GM12878 (cell line): ENCODE measurements at regions of chr11 and their contacts with region 1.

Region 1: GRCh38 chr11:90476442-90477007 is 253.7 kb upstream of the CHORDC1 start:
- DNase-seq: peak; percentile 8
- ATAC-seq: peak; percentile 72
- H3K4me3 ChIP-seq: no peak overlapping the region
- H3K27ac ChIP-seq: no peak overlapping the region
- H3K4me1 ChIP-seq: no peaks in the 10 kb centered on the region
- H3K27me3 ChIP-seq: no peaks in the 10 kb centered on the region
- CTCF ChIP-seq: peak; percentile 49 to 55 (median 52)
- EP300 ChIP-seq: no peak
- POLR2A ChIP-seq: no peak
- RAD21 ChIP-seq: peak; percentile 64

Region 2: DNA sequence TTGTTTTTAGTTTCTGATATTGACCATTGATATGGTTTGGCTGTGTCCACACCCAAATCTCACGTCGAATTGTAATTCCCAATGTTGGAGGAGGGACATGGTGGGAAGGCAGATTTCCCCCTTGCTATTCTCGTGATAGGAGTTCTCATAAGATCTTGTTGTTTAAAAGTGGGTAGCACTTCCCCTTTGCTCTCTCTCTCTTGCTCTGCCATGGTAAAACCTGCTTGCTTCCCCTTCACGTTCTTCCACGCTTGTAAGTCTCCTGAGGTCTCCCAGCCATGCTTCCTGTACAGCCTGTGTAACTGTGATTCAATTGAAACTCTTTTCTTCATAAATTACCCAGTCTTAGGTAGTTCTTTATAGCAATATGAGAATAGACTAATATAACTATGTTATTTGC is 50.1 kb before region 1 on chr11:
- CTCF ChIA-PET with region 1: no interaction called
- POLR2A ChIA-PET with region 1: no interaction called
- RAD21 ChIA-PET with region 1: no interaction called
- SMC1A ChIA-PET with region 1: no interaction called
- in situ Hi-C with region 1: no loop called
- intact Hi-C with region 1: no loop called
- DNase-seq: no peak
- ATAC-seq: peak; percentile 36; the same call in 2 of the 3 replicates
- H3K4me3 ChIP-seq: no peak overlapping the region
- H3K27ac ChIP-seq: no peak overlapping the region
- H3K4me1 ChIP-seq: no peaks in the 10 kb centered on the region
- H3K27me3 ChIP-seq: no peaks in the 10 kb centered on the region
- CTCF ChIP-seq: no peak
- EP300 ChIP-seq: no peak
- POLR2A ChIP-seq: no peak
- RAD21 ChIP-seq: no peak

Region 3: GRCh38 chr11:90453525-90453924 is 23.0 kb before region 1 on chr11:
- CTCF ChIA-PET with region 1: no interaction called
- POLR2A ChIA-PET with region 1: no interaction called
- RAD21 ChIA-PET with region 1: no interaction called
- SMC1A ChIA-PET with region 1: no interaction called
- in situ Hi-C with region 1: no loop called
- intact Hi-C with region 1: no loop called
- DNase-seq: no peak
- ATAC-seq: no peak
- H3K4me3 ChIP-seq: no peak overlapping the region
- H3K27ac ChIP-seq: no peak overlapping the region
- H3K4me1 ChIP-seq: no peaks in the 10 kb centered on the region
- H3K27me3 ChIP-seq: no peaks in the 10 kb centered on the region
- CTCF ChIP-seq: no peak
- EP300 ChIP-seq: no peak
- POLR2A ChIP-seq: no peak
- RAD21 ChIP-seq: no peak

Region 4: DNA sequence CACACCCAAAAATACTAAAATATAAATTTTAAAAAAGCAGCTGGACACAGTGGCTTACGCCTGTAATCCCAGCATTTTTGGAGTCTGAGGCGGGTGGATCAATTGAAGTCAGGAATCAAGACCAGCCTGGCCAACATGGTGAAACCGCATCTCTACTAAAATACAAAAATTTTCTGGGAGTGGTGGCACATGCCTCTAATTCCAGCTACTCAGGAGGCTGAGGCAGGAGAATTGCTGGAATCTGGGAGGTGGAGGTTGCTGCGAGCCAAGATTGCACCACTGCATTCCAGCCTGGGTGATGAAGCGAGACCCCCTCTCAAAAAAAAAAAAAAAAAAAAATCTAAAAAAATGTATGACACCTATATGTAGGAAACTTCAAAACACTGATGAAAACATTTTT is 11.0 kb before region 1 on chr11:
- CTCF ChIA-PET with region 1: interaction called, 11 read pairs
- POLR2A ChIA-PET with region 1: no interaction called
- RAD21 ChIA-PET with region 1: interaction called, 4 read pairs
- SMC1A ChIA-PET with region 1: interaction called, 5 read pairs
- in situ Hi-C with region 1: no loop called
- intact Hi-C with region 1: no loop called
- DNase-seq: no peak
- ATAC-seq: no peak
- H3K4me3 ChIP-seq: no peak overlapping the region
- H3K27ac ChIP-seq: no peak overlapping the region
- H3K4me1 ChIP-seq: no peaks in the 10 kb centered on the region
- H3K27me3 ChIP-seq: no peaks in the 10 kb centered on the region
- CTCF ChIP-seq: no peak
- EP300 ChIP-seq: no peak
- POLR2A ChIP-seq: no peak
- RAD21 ChIP-seq: no peak

Region 5: GRCh38 chr11:90542092-90542491 is 65.6 kb after region 1 on chr11:
- CTCF ChIA-PET with region 1: interaction called, 12 read pairs
- POLR2A ChIA-PET with region 1: no interaction called
- RAD21 ChIA-PET with region 1: no interaction called
- SMC1A ChIA-PET with region 1: interaction called, 8 read pairs
- in situ Hi-C with region 1: no loop called
- intact Hi-C with region 1: no loop called
- DNase-seq: no peak
- ATAC-seq: no peak
- H3K4me3 ChIP-seq: no peak overlapping the region
- H3K27ac ChIP-seq: no peak overlapping the region
- H3K4me1 ChIP-seq: no peaks in the 10 kb centered on the region
- H3K27me3 ChIP-seq: no peaks in the 10 kb centered on the region
- CTCF ChIP-seq: 0 out of 6 replicates have a peak, but pooled peaks of 1 of the 3 experiments have one; percentile 5
- EP300 ChIP-seq: no peak
- POLR2A ChIP-seq: no peak
- RAD21 ChIP-seq: no peak

Region 6: GRCh38 chr11:90675990-90676389 is 199.5 kb after region 1 on chr11:
- CTCF ChIA-PET with region 1: interaction called, 9 read pairs
- POLR2A ChIA-PET with region 1: no interaction called
- RAD21 ChIA-PET with region 1: interaction called, 3 read pairs
- SMC1A ChIA-PET with region 1: no interaction called
- in situ Hi-C with region 1: no loop called
- intact Hi-C with region 1: loop called (anchors 5 kb)
- DNase-seq: no peak
- ATAC-seq: no peak
- H3K4me3 ChIP-seq: no peak overlapping the region
- H3K27ac ChIP-seq: no peak overlapping the region
- H3K4me1 ChIP-seq: no peaks in the 10 kb centered on the region
- H3K27me3 ChIP-seq: no peaks in the 10 kb centered on the region
- CTCF ChIP-seq: no peak
- EP300 ChIP-seq: no peak
- POLR2A ChIP-seq: no peak
- RAD21 ChIP-seq: no peak

Region 7: GRCh38 chr11:91248199-91248807 is 771.8 kb after region 1 on chr11:
- CTCF ChIA-PET with region 1: interaction called, 19 read pairs
- POLR2A ChIA-PET with region 1: no interaction called
- RAD21 ChIA-PET with region 1: no interaction called
- SMC1A ChIA-PET with region 1: interaction called, 5 read pairs
- in situ Hi-C with region 1: no loop called
- intact Hi-C with region 1: no loop called
- DNase-seq: no peak
- ATAC-seq: peak; percentile 55; the same call in 2 of the 3 replicates
- H3K4me3 ChIP-seq: no peak overlapping the region
- H3K27ac ChIP-seq: no peak overlapping the region
- H3K4me1 ChIP-seq: no peaks in the 10 kb centered on the region
- H3K27me3 ChIP-seq: no peaks in the 10 kb centered on the region
- CTCF ChIP-seq: peak; percentile 56 to 60 (median 60)
- EP300 ChIP-seq: no peak
- POLR2A ChIP-seq: no peak
- RAD21 ChIP-seq: peak; percentile 64